PC-9 (cell line): ENCODE measurements at regions of chr11 and their contacts with region 1.

Region 1: GRCh38 chr11:117946842-117947526 is 17.8 kb upstream of the TMPRSS13 start:
- DNase-seq: peak; percentile 84 to 90
- H3K4me3 ChIP-seq: no peak overlapping the region
- H3K27ac ChIP-seq: no peak overlapping the region
- H3K4me1 ChIP-seq: peaks cover 18% of the 10 kb centered on the region
- H3K27me3 ChIP-seq: peaks cover 12% of the 10 kb centered on the region; the same call in 1 of the 2 replicates
- CTCF ChIP-seq: peak; percentile 97

Region 2: GRCh38 chr11:117426269-117426685 is 520.7 kb before region 1 on chr11:
- CTCF ChIA-PET with region 1: interaction called, 4 read pairs
- POLR2A ChIA-PET with region 1: no interaction called
- intact Hi-C with region 1: loop called (anchors 10 kb)
- DNase-seq: peak in 1 of 2 experiments; percentile 60
- H3K4me3 ChIP-seq: no peak overlapping the region
- H3K27ac ChIP-seq: no peak overlapping the region
- H3K4me1 ChIP-seq: no peaks in the 10 kb centered on the region
- H3K27me3 ChIP-seq: peaks cover 91% of the 10 kb centered on the region
- CTCF ChIP-seq: peak; percentile 100

Region 3: DNA sequence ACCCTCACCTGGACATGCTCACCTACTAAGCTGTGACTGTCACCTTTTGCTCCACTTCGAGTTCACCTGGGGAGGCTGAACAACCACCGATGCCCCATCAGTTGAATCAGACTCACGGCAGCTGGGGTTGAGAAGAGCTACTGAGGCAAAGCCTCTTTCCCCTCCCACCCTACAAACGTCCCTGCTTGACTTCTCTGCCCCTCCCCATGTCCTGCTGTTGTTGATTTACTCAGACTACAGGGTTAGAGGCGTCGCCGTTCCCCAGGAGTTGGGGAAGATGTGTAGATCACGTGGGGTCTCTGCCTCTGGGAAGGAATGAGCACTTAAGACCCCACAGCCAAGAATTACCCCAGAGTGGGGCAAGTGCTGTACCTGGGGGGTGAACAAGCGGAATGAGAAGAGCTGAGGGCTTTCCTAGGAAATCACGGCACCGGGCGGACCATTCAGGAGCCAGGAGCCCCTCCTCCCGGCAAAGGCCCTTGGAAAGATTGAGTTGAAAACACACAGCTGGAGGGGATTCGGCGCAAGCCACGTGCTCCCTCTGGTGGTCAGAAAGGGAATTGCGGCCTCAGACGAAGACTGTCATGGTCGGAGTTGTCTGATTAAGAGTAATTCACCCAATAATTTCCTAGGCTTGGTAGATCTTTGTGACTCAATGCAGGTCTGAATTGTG is 129.5 kb before region 1 on chr11:
- CTCF ChIA-PET with region 1: interaction called, 13 read pairs
- POLR2A ChIA-PET with region 1: no interaction called
- intact Hi-C with region 1: no loop called
- DNase-seq: peak; percentile 54 to 70
- H3K4me3 ChIP-seq: no peak overlapping the region
- H3K27ac ChIP-seq: no peak overlapping the region
- H3K4me1 ChIP-seq: 0 out of 2 replicates have a peak, but pooled peaks cover 6% of the 10 kb centered on the region
- H3K27me3 ChIP-seq: no peaks in the 10 kb centered on the region
- CTCF ChIP-seq: peak; percentile 99

Region 4: GRCh38 chr11:117907251-117907981 is 39.6 kb before region 1 on chr11:
- CTCF ChIA-PET with region 1: interaction called, 19 read pairs
- POLR2A ChIA-PET with region 1: no interaction called
- intact Hi-C with region 1: no loop called
- DNase-seq: peak; percentile 94 to 95
- H3K4me3 ChIP-seq: peak overlapping the region; percentile 39; the same call in 1 of the 2 replicates
- H3K27ac ChIP-seq: peak overlapping the region; percentile 57
- H3K4me1 ChIP-seq: peaks cover 12% of the 10 kb centered on the region
- H3K27me3 ChIP-seq: no peaks in the 10 kb centered on the region
- CTCF ChIP-seq: no peak

Region 5: DNA sequence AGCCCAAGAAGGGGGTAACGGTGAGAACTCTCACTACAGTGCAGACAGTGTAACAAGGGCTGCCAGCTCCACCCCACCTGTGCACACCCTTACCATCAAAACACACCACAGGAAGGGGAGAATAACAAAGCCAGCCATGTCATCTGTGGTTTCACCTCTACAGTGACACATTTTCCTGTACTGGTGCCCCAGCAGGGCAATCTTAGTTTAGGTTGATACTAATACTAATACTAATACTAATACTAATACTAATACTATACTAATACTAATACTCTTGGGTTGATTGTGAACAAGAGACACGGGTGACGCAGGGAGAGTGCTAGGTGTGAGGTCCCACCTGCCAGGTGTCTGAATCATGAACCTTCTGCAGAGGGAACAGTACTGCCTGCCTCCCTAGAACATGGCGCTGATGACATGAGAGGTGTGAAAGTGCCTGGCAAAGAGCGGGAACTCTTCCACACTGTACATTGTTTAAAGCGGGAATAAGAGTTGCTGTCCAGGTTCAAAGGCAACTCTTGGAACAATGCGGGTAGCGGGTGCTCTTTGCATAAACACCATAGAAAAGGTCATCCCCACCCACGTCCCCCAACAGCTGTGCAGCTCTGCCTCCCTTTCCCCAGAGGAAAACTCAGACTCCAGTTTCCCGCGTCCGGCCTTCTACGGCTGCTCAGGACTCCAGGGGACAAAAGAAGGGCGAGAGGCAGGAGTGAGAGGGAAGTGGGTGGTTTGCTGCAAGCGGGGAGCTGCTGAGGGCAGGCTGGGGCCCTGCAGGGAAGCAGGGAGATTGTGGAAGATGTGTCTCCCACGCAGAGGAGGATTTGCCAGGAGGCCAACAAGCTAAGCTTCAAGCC is 104.9 kb after region 1 on chr11:
- CTCF ChIA-PET with region 1: interaction called, 9 read pairs
- POLR2A ChIA-PET with region 1: no interaction called
- intact Hi-C with region 1: loop called (anchors 1 kb)
- DNase-seq: no peak
- H3K4me3 ChIP-seq: no peak overlapping the region
- H3K27ac ChIP-seq: no peak overlapping the region
- H3K4me1 ChIP-seq: peaks cover 2% of the 10 kb centered on the region; the same call in 1 of the 2 replicates
- H3K27me3 ChIP-seq: peaks cover 16% of the 10 kb centered on the region
- CTCF ChIP-seq: no peak